Aorta (tissue), 5 donors: ENCODE measurements at regions of chr17 and their contacts with region 1.

Region 1: GRCh38 chr17:60392042-60392844 is at the start of gene USP32:
- DNase-seq: peak; percentile 100
- ATAC-seq: peak; percentile 100
- H3K4me3 ChIP-seq: peak within 1 kb of the TSS; percentile 43 to 74
- H3K27ac ChIP-seq: peak within 1 kb of the TSS; percentile 37 to 76
- H3K4me1 ChIP-seq: no peaks in the 10 kb centered on the region
- H3K27me3 ChIP-seq: no peaks in the 10 kb centered on the region
- total RNA-seq, gene USP32: 53.7 to 57.7 TPM

Region 2: GRCh38 chr17:60321336-60322055 is 70.7 kb before region 1 on chr17:
- intact Hi-C with region 1: no loop called
- DNase-seq: no peak
- ATAC-seq: no peak
- H3K4me3 ChIP-seq: no peak overlapping the region
- H3K27ac ChIP-seq: no peak overlapping the region
- H3K4me1 ChIP-seq: peaks cover 0 to 4% of the 10 kb centered on the region in 2 donors
- H3K27me3 ChIP-seq: no peaks in the 10 kb centered on the region

Region 3: GRCh38 chr17:60435244-60436167 is 43.3 kb after region 1 on chr17:
- intact Hi-C with region 1: no loop called
- DNase-seq: peak; percentile 70 to 81
- ATAC-seq: peak; percentile 96
- H3K4me3 ChIP-seq: no peak overlapping the region
- H3K27ac ChIP-seq: peak overlapping the region in 1 of 2 donors; percentile 12
- H3K4me1 ChIP-seq: no peaks in the 10 kb centered on the region
- H3K27me3 ChIP-seq: no peaks in the 10 kb centered on the region

Region 4: GRCh38 chr17:60468371-60468770 is 76.1 kb after region 1 on chr17:
- intact Hi-C with region 1: loop called in 1 of 2 experiments (anchors 2 kb)
- DNase-seq: no peak
- ATAC-seq: no peak
- H3K4me3 ChIP-seq: no peak overlapping the region
- H3K27ac ChIP-seq: no peak overlapping the region
- H3K4me1 ChIP-seq: peaks cover 0 to 3% of the 10 kb centered on the region in 2 donors
- H3K27me3 ChIP-seq: no peaks in the 10 kb centered on the region